OCI-LY7 (cell line): ENCODE measurements at regions of chr10 and their contacts with region 1.

Region 1: DNA sequence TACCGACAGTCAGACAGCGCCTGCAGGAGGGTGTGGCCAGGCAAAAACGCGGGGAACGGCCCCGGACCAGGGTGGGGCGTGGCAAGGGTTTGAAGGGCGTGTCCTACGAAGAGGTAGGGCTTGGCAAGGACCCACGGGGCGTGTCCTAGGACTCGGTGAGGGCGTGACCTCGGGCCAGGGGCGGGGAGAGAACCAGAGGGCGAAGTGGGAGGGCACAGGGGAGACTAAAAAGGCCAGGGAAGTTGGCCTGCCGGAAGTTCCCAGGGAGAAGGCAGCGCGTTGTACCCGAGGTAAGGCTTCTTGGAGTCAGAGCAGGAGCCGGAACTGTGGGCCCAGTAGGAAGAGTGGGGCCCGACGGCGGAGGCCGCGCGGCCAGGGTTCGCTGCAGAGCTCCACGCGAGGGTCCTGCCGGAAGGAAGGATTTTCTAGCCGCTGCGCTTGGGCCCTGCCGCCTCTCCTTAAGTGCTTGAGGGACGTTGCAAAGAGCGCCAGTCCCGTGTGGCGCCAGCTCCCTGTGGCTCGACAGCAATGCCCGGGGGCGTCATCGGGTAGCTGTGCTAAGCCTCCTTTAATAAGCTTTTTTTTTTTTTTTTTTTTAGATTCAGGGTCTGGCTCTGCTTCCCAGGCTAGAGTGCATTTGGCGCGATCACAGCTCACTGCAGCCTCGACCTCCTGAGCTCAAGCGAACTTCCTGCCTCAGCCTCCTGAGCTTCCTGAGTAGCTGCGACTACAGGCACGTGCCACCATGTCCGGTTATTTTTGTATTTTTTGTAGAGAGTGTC is at the start of gene PTER:
- DNase-seq: peak; percentile 97
- H3K4me3 ChIP-seq: peak within 1 kb of the TSS; percentile 76
- H3K27ac ChIP-seq: peak within 1 kb of the TSS; percentile 65
- H3K4me1 ChIP-seq: peaks cover 41% of the 10 kb centered on the region
- CTCF ChIP-seq: no peak
- total RNA-seq, gene PTER: 17.7 and 22.8 TPM in 2 replicates

Region 2: GRCh38 chr10:15789793-15790525 is 647.0 kb before region 1 on chr10:
- CTCF ChIA-PET with region 1: no interaction called
- POLR2A ChIA-PET with region 1: no interaction called
- intact Hi-C with region 1: loop called (anchors 10 kb)
- DNase-seq: no peak
- H3K4me3 ChIP-seq: no peak overlapping the region
- H3K27ac ChIP-seq: no peak overlapping the region
- H3K4me1 ChIP-seq: peaks cover 31% of the 10 kb centered on the region
- CTCF ChIP-seq: no peak

Region 3: GRCh38 chr10:15859906-15860691 is 576.9 kb before region 1 on chr10 and contains the start of gene MINDY3:
- CTCF ChIA-PET with region 1: interaction called, 3 read pairs
- POLR2A ChIA-PET with region 1: no interaction called
- intact Hi-C with region 1: loop called (anchors 2 kb)
- DNase-seq: peak; percentile 91
- H3K4me3 ChIP-seq: peak within 1 kb of the TSS; percentile 92
- H3K27ac ChIP-seq: peak within 1 kb of the TSS; percentile 69
- H3K4me1 ChIP-seq: peaks cover 25% of the 10 kb centered on the region
- CTCF ChIP-seq: no peak
- total RNA-seq, gene MINDY3: 15.7 and 16.2 TPM in 2 replicates

Region 4: GRCh38 chr10:16817125-16818019 is 380.4 kb after region 1 on chr10 and contains the start of gene RSU1:
- CTCF ChIA-PET with region 1: no interaction called
- POLR2A ChIA-PET with region 1: no interaction called
- intact Hi-C with region 1: loop called (anchors 10 kb)
- DNase-seq: peak; percentile 99
- H3K4me3 ChIP-seq: peak within 1 kb of the TSS; percentile 81
- H3K27ac ChIP-seq: peak within 1 kb of the TSS; percentile 20
- H3K4me1 ChIP-seq: peaks cover 12% of the 10 kb centered on the region
- CTCF ChIP-seq: no peak
- total RNA-seq, gene RSU1: 25.3 and 26.0 TPM in 2 replicates

Region 5: GRCh38 chr10:17200912-17201793 is 764.2 kb after region 1 on chr10 and contains the start of gene TRDMT1:
- CTCF ChIA-PET with region 1: no interaction called
- POLR2A ChIA-PET with region 1: no interaction called
- intact Hi-C with region 1: loop called (anchors 5 kb)
- DNase-seq: peak; percentile 81
- H3K4me3 ChIP-seq: peak within 1 kb of the TSS; percentile 94
- H3K27ac ChIP-seq: peak within 1 kb of the TSS; percentile 53
- H3K4me1 ChIP-seq: peaks cover 18% of the 10 kb centered on the region
- CTCF ChIP-seq: 0 out of 2 replicates have a peak, but pooled peaks have one; percentile 30
- total RNA-seq, gene TRDMT1: 10.4 and 12.7 TPM in 2 replicates